Activated CD4-positive, alpha-beta memory T cell treated with anti-CD3 and anti-CD28 coated beads for 36 hours (primary cell): ENCODE measurements at regions of chr17 and their contacts with region 1.

Region 1: GRCh38 chr17:28282596-28282995 is 36.4 kb upstream of the TMEM97 start:
- DNase-seq: no peak
- H3K4me3 Mint-ChIP-seq: no peak overlapping the region
- H3K27ac Mint-ChIP-seq: no peak overlapping the region
- H3K4me1 Mint-ChIP-seq: peaks cover 10% of the 10 kb centered on the region
- H3K27me3 Mint-ChIP-seq: peaks cover 11% of the 10 kb centered on the region

Region 2: GRCh38 chr17:27199948-27200347 is 1082.6 kb before region 1 on chr17:
- CTCF ChIA-PET with region 1: no interaction called
- POLR2A ChIA-PET with region 1: no interaction called
- intact Hi-C with region 1: loop called (anchors 5 kb)
- DNase-seq: no peak
- H3K4me3 Mint-ChIP-seq: no peak overlapping the region
- H3K27ac Mint-ChIP-seq: no peak overlapping the region
- H3K4me1 Mint-ChIP-seq: no peaks in the 10 kb centered on the region
- H3K27me3 Mint-ChIP-seq: no peaks in the 10 kb centered on the region

Region 3: GRCh38 chr17:28295677-28296578 is 13.3 kb after region 1 on chr17:
- CTCF ChIA-PET with region 1: interaction called, 3 read pairs
- POLR2A ChIA-PET with region 1: interaction called, 5 read pairs
- intact Hi-C with region 1: loop called (anchors 1 kb)
- DNase-seq: no peak
- H3K4me3 Mint-ChIP-seq: no peak overlapping the region
- H3K27ac Mint-ChIP-seq: peak overlapping the region; percentile 55
- H3K4me1 Mint-ChIP-seq: peaks cover 15% of the 10 kb centered on the region
- H3K27me3 Mint-ChIP-seq: peaks cover 14% of the 10 kb centered on the region

Region 4: DNA sequence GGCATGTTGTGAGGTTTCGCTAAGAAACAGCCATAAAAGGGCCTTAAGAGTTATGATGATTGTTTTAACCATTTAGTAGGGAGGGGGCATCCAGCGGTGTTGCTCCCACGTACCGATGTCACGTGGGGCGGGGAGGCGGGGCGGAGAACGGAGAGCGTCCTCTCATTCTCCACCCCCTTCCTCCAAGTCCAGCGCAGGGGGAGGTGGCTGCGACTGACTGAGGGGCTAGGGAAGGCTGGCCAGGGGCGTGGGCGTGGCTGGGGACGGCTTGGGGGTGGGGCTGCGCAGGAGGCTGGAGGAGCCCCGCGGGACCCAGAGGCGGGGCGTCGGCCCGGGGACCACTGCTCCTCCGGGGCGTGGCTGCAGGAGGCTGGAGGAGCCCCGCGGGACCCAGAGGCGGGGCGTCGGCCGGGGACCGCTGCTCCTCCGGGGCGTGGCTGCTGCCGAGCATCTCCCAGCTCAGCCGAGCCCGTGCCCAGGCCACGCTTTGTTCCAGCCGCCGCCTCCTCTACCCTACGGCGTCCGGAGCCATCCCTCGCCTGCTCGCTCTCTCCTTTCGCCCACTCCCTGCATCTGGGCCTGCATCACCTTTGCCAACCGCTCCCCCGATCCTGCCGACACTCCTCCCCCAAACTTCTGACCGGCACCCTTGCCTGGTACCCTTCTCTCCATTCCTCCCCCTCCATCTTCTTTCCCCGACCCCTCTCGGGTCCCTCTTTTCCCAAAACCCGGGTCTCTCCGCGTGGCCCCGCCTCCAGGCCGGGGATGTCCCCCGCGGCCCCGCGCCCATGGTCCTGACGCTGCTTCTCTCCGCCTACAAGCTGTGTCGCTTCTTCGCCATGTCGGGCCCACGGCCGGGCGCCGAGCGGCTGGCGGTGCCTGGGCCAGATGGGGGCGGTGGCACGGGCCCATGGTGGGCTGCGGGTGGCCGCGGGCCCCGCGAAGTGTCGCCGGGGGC is 88.9 kb after region 1 on chr17 and contains the start of gene SARM1:
- CTCF ChIA-PET with region 1: no interaction called
- POLR2A ChIA-PET with region 1: no interaction called
- intact Hi-C with region 1: no loop called
- DNase-seq: peak; percentile 93
- H3K4me3 Mint-ChIP-seq: peak within 1 kb of the TSS; percentile 86
- H3K27ac Mint-ChIP-seq: peak within 1 kb of the TSS; percentile 79
- H3K4me1 Mint-ChIP-seq: peaks cover 16% of the 10 kb centered on the region
- H3K27me3 Mint-ChIP-seq: no peaks in the 10 kb centered on the region
- total RNA-seq, gene SARM1: 16.5 to 18.3 TPM